ENCODE measurements at regions of chr12 and their contacts with region 1.

Region 1: GRCh38 chr12:98532681-98533304 is 17.4 kb downstream of the TMPO start:
- DNase-seq: peak in 4 of 5 donors; percentile 41 to 50 (median 48)
- H3K4me3 ChIP-seq: no peak overlapping the region
- H3K4me3 Mint-ChIP-seq: no peak overlapping the region
- H3K27ac ChIP-seq: no peak overlapping the region
- H3K27ac Mint-ChIP-seq: peak overlapping the region in 6 of 7 donors; percentile 32 to 48 (median 42)
- H3K4me1 ChIP-seq: peaks cover under 1% of the 10 kb centered on the region
- H3K4me1 Mint-ChIP-seq: peaks cover 5 to 28% (median 12%) of the 10 kb centered on the region in 4 donors
- H3K27me3 ChIP-seq: no peaks in the 10 kb centered on the region
- H3K27me3 Mint-ChIP-seq: no peaks in the 10 kb centered on the region

Region 2: GRCh38 chr12:97681612-97682504 is 850.9 kb before region 1 on chr12:
- CTCF ChIA-PET with region 1: no interaction called
- POLR2A ChIA-PET with region 1: no interaction called
- intact Hi-C with region 1: no loop called
- DNase-seq: no peak
- H3K4me3 ChIP-seq: no peak overlapping the region
- H3K4me3 Mint-ChIP-seq: no peak overlapping the region
- H3K27ac ChIP-seq: no peak overlapping the region
- H3K27ac Mint-ChIP-seq: no peak overlapping the region
- H3K4me1 ChIP-seq: no peaks in the 10 kb centered on the region
- H3K4me1 Mint-ChIP-seq: peaks cover 0 to 1% (median 0%) of the 10 kb centered on the region in 4 donors
- H3K27me3 ChIP-seq: no peaks in the 10 kb centered on the region
- H3K27me3 Mint-ChIP-seq: no peaks in the 10 kb centered on the region

Region 3: DNA sequence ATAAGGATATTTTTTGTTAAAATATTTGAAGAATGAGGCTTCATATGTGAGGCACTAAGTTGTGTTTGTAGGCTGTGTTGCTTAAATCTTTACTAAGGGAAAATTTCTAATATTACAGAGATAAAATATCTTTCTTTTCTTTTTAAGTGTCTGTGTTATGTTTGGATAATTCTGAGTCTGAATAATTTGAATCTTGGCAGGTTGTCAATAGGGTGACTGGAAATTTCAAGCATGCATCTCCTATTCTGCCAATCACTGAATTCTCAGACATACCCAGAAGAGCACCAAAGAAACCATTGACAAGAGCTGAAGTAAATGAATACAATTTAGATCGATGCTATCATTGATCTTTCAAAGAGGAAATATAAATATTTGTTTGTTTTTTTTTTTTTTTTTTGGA is 12.0 kb after region 1 on chr12:
- CTCF ChIA-PET with region 1: interaction called, 11 read pairs
- POLR2A ChIA-PET with region 1: no interaction called
- intact Hi-C with region 1: no loop called
- DNase-seq: no peak
- H3K4me3 ChIP-seq: no peak overlapping the region
- H3K4me3 Mint-ChIP-seq: no peak overlapping the region
- H3K27ac ChIP-seq: no peak overlapping the region
- H3K27ac Mint-ChIP-seq: no peak overlapping the region
- H3K4me1 ChIP-seq: no peaks in the 10 kb centered on the region
- H3K4me1 Mint-ChIP-seq: peaks cover 0 to 9% (median 6%) of the 10 kb centered on the region in 4 donors
- H3K27me3 ChIP-seq: no peaks in the 10 kb centered on the region
- H3K27me3 Mint-ChIP-seq: no peaks in the 10 kb centered on the region